B cell (primary cell): ENCODE measurements at regions of chr20 and their contacts with region 1.

Region 1: GRCh38 chr20:38073307-38074071 is 39.9 kb downstream of the RPRD1B start:
- DNase-seq: peak; percentile 75
- ATAC-seq: peak; percentile 53
- H3K4me3 ChIP-seq: no peak overlapping the region
- H3K4me3 Mint-ChIP-seq: no peak overlapping the region
- H3K27ac ChIP-seq: peak overlapping the region in 1 of 2 donors; percentile 5
- H3K27ac Mint-ChIP-seq: peak overlapping the region; percentile 68
- H3K4me1 ChIP-seq: peaks cover 27 to 41% of the 10 kb centered on the region in 2 donors
- H3K4me1 Mint-ChIP-seq: peaks cover 53% of the 10 kb centered on the region
- H3K27me3 ChIP-seq: no peaks in the 10 kb centered on the region
- H3K27me3 Mint-ChIP-seq: no peaks in the 10 kb centered on the region
- CTCF ChIP-seq: peak; percentile 81

Region 2: DNA sequence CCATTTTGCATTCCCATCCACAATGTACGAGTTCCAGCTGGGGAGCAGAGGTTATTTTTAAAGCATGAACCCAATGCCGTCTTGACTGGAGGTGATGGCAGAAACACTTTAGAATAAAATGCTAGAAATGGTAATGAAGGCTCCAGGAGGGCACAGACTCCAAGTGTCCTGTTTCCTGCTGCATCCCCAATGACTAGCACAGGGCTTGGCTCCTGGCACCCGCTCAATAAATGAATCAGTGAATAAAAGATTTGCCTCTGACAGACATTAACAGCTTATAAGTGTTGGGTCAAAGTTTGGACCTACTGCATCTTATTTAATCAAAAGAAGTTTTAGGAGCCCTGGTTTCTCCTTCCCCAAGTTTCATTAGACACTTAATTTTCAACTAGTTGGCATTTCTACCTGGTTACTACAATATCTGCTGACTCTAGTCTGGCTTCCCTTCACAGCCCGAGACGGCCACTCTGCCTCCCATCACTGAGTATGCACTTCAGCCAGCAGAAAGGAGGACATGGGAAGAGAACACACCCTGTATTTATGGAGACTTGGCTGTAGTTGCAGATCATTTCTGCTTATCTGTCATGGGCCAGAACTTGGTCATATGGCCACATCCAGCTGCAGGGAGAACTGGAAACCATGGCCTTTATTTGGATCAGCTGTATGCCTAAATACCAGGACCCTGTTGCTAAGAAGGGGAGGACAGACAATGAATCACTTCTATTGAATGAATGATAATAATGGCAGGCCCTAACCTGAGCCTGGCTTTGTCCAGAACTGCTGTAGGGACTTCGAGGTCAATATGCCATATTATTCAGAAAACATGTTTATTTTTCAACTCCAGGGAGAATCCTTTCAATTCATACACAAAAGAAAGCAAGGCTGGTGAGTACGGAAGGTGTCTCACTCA is 103.3 kb before region 1 on chr20:
- CTCF ChIA-PET with region 1: no interaction called
- POLR2A ChIA-PET with region 1: no interaction called
- intact Hi-C with region 1: no loop called
- DNase-seq: no peak
- ATAC-seq: no peak
- H3K4me3 ChIP-seq: no peak overlapping the region
- H3K4me3 Mint-ChIP-seq: no peak overlapping the region
- H3K27ac ChIP-seq: no peak overlapping the region
- H3K27ac Mint-ChIP-seq: no peak overlapping the region
- H3K4me1 ChIP-seq: no peaks in the 10 kb centered on the region
- H3K4me1 Mint-ChIP-seq: no peaks in the 10 kb centered on the region
- H3K27me3 ChIP-seq: peaks cover 0 to 7% (median 0%) of the 10 kb centered on the region in 4 experiments
- H3K27me3 Mint-ChIP-seq: peaks cover 15% of the 10 kb centered on the region
- CTCF ChIP-seq: no peak

Region 3: DNA sequence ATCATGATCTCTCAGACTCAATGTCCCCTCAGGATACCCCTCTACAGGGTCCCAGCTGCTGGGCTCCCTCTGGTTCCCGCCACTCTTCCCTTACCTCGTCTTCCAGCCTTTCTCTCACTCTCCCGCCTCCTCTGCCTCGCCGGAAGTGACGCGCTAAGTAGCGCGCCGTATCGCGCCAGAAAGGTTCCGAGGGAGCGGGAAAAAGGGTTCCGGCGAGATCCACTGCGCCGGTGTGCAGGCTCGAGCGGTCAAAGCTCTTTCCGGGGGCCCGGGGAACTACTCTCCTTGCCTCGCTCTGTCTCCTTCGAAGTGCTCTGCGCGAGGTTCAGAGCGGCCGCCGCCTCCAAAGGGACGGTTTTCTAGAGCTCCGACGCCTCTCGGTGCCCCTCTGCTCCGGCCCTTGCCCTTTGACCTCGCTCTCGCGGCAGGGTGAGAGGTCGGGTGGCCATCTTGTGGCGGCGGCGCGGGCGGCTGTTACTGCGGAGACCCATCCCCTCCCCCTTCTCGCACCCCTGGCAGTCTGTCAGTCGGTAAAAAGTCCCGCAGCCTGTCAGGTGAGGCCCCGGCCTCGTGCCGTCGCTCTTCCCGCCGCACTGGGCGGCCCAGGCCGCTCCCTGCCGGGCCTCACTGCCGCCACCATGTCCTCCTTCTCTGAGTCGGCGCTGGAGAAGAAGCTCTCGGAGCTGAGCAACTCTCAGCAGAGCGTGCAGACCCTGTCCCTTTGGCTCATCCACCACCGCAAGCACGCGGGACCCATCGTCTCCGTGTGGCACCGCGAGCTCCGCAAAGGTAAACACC is 40.0 kb before region 1 on chr20 and contains the starts of genes RPRD1B and TTI1:
- CTCF ChIA-PET with region 1: interaction called, 7 read pairs
- POLR2A ChIA-PET with region 1: no interaction called
- intact Hi-C with region 1: loop called (anchors 1 kb)
- DNase-seq: peak; percentile 95
- ATAC-seq: peak; percentile 89
- H3K4me3 ChIP-seq: peak within 1 kb of the TSS; percentile 84 to 98 (median 87)
- H3K4me3 Mint-ChIP-seq: peak within 1 kb of the TSS; percentile 95
- H3K27ac ChIP-seq: peak within 1 kb of the TSS; percentile 87 to 90
- H3K27ac Mint-ChIP-seq: peak within 1 kb of the TSS; percentile 92
- H3K4me1 ChIP-seq: peaks cover 35 to 46% of the 10 kb centered on the region in 2 donors
- H3K4me1 Mint-ChIP-seq: peaks cover 74% of the 10 kb centered on the region
- H3K27me3 ChIP-seq: no peaks in the 10 kb centered on the region
- H3K27me3 Mint-ChIP-seq: no peaks in the 10 kb centered on the region
- CTCF ChIP-seq: no peak
- total RNA-seq, gene RPRD1B: 54.9 and 55.9 TPM in 2 replicates
- total RNA-seq, gene TTI1: 33.9 and 34.5 TPM in 2 replicates

Region 4: DNA sequence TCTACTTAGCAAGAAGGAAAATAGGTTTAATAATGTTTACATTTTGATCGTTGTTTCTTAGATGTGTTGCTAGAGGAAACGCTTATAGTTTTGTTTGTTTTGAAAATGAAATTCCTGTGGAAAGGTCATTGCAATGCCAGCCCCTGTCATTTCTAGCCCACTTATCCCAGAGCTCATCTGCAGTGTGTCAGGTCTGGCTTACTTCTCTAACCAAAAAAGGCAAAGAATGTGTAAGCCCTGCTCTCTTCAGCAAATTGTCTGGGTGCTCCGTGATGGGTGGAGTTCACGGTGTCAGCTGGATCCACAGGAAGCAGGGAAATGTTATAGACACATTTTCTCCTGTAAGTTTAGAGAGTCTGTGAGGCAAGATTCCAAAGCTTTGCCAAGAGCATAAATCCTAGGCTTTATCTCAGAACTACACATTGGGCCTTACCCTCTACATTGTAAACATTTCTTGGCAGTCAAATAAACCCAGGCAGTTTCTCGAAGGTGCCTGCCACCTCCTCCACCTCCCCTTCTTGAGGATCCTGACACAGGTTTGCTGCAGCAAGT is 11.0 kb after region 1 on chr20:
- CTCF ChIA-PET with region 1: interaction called, 131 read pairs
- POLR2A ChIA-PET with region 1: interaction called, 8 read pairs
- intact Hi-C with region 1: no loop called
- DNase-seq: no peak
- ATAC-seq: no peak
- H3K4me3 ChIP-seq: no peak overlapping the region
- H3K4me3 Mint-ChIP-seq: no peak overlapping the region
- H3K27ac ChIP-seq: no peak overlapping the region
- H3K27ac Mint-ChIP-seq: no peak overlapping the region
- H3K4me1 ChIP-seq: no peaks in the 10 kb centered on the region
- H3K4me1 Mint-ChIP-seq: peaks cover 41% of the 10 kb centered on the region
- H3K27me3 ChIP-seq: no peaks in the 10 kb centered on the region
- H3K27me3 Mint-ChIP-seq: no peaks in the 10 kb centered on the region
- CTCF ChIP-seq: no peak

Region 5: DNA sequence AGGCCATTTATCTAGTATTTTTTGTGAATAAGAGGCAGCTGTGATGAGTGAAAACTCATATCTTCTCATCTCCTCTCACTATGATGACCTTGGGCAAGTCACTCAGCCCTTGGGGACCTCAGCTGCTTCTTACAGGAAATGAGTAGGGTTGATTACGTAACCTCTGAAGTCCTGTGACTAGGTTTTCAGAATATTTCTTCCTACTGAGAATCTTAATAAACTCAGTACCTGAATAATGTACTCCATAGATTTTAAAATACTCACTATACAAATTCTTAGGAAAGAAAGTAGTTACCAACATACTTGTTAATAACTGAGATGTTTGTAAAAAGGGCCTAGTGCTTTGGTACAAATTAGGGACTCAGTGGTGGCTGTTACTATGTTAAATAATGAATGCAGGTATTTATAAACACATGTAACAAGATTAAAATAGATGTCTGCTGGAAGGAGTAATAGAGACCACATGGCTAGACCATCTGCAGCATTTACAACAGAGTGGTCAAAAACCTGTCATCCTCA is 20.9 kb after region 1 on chr20:
- CTCF ChIA-PET with region 1: interaction called, 131 read pairs
- POLR2A ChIA-PET with region 1: interaction called, 20 read pairs
- intact Hi-C with region 1: loop called (anchors 1 kb)
- DNase-seq: peak; percentile 86
- ATAC-seq: peak; percentile 68
- H3K4me3 ChIP-seq: peak overlapping the region in 1 of 5 experiments; percentile 21
- H3K4me3 Mint-ChIP-seq: peak overlapping the region; percentile 77
- H3K27ac ChIP-seq: peak overlapping the region; percentile 95 to 96
- H3K27ac Mint-ChIP-seq: peak overlapping the region; percentile 98
- H3K4me1 ChIP-seq: peaks cover 53 to 60% of the 10 kb centered on the region in 2 donors
- H3K4me1 Mint-ChIP-seq: peaks cover 72% of the 10 kb centered on the region
- H3K27me3 ChIP-seq: no peaks in the 10 kb centered on the region
- H3K27me3 Mint-ChIP-seq: no peaks in the 10 kb centered on the region
- CTCF ChIP-seq: no peak

Region 6: DNA sequence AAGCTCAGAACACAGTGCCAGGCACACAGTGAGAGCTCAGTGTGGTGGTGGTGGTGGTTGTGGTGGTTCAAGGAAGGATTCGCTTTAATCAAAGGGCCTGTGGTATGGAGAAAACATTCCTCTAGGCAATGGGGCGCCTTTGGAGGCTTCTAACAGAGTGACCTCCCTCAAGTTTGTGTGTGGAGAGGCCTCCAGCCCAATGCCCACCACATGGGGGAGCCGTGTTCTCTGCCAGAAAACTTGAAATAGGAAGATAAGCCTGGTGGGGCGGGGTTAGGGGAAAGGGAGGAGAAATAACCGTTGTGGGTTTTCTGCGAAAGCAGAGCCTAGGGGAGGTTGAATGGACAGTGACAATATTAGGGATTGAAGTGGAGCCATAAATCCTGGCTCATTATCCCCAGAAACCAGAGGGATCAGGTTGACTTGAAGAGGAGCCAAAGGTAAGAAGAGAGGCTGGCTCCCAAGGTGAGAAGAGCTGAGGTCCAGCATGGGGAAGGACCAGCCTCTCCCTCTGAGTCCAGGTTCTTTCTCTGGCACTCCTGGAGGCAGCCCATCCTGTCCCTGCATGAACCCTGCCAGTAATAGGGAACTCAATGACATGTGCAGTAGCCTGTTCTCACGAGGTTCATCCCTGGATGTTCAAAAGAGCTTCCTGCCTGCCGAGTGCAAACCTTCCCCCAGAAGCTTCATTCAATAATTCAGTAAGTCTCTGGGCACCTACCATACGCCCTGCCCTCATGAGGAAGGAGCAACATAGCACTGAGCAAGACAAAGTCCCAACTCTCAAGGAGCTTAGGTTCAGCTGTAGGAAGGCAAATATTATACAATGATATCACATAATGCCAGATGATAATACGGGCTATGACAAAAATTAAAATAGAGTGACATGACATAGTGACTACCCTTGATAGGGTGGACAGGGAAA is 40.2 kb after region 1 on chr20:
- CTCF ChIA-PET with region 1: interaction called, 101 read pairs
- POLR2A ChIA-PET with region 1: no interaction called
- intact Hi-C with region 1: no loop called
- DNase-seq: no peak
- ATAC-seq: no peak
- H3K4me3 ChIP-seq: no peak overlapping the region
- H3K4me3 Mint-ChIP-seq: no peak overlapping the region
- H3K27ac ChIP-seq: no peak overlapping the region
- H3K27ac Mint-ChIP-seq: no peak overlapping the region
- H3K4me1 ChIP-seq: peaks cover 0 to 3% of the 10 kb centered on the region in 2 donors
- H3K4me1 Mint-ChIP-seq: peaks cover 3% of the 10 kb centered on the region
- H3K27me3 ChIP-seq: no peaks in the 10 kb centered on the region
- H3K27me3 Mint-ChIP-seq: no peaks in the 10 kb centered on the region
- CTCF ChIP-seq: no peak

Region 7: GRCh38 chr20:38123021-38123587 is 49.6 kb after region 1 on chr20:
- CTCF ChIA-PET with region 1: interaction called, 15 read pairs
- POLR2A ChIA-PET with region 1: no interaction called
- intact Hi-C with region 1: no loop called
- DNase-seq: no peak
- ATAC-seq: no peak
- H3K4me3 ChIP-seq: no peak overlapping the region
- H3K4me3 Mint-ChIP-seq: no peak overlapping the region
- H3K27ac ChIP-seq: no peak overlapping the region
- H3K27ac Mint-ChIP-seq: no peak overlapping the region
- H3K4me1 ChIP-seq: no peaks in the 10 kb centered on the region
- H3K4me1 Mint-ChIP-seq: no peaks in the 10 kb centered on the region
- H3K27me3 ChIP-seq: no peaks in the 10 kb centered on the region
- H3K27me3 Mint-ChIP-seq: no peaks in the 10 kb centered on the region
- CTCF ChIP-seq: no peak

Region 8: DNA sequence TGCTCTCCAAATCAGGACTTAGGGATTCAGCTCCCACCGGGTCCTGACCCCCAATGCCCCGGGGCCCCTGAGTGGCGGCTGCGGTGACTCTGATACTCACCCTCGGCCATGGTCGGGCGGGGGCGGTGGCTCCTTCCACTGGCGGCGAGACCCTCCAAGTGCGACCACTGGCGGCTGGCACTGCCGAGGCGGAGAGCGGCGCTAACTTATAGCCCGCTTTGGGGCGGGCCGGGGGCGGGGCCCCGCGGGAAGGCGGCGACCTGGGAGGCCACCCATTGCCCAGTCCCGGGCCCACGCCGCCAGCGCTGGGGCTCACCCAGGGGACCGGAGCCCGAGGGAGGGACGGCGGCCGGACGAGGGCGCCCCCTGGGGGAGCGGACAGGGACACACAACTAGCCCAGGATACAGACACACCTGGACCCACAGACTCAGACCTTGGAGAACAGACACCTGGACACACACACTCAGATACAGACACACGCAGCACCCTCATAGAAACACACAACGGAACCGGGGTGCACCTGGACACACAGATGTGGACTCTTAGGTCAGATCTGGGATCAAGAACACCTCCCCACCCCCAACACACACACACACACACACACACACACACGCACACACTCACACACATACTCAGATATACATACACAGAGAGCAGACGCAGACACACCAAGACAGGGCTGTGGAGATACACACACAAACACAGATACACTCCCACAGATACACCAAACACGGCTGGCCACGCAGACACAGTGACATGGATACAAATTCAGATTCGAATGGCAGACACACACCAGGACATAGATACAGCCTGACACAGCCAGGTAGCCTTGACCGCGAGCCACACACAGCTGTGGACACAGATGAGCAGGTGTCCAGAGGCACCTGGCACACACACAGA is 91.8 kb after region 1 on chr20 and contains the start of gene TGM2:
- CTCF ChIA-PET with region 1: interaction called, 62 read pairs
- POLR2A ChIA-PET with region 1: interaction called, 6 read pairs
- intact Hi-C with region 1: loop called (anchors 1 kb)
- DNase-seq: peak; percentile 82
- ATAC-seq: peak; percentile 95
- H3K4me3 ChIP-seq: peak within 1 kb of the TSS in 4 of 5 experiments; percentile 18 to 44 (median 32)
- H3K4me3 Mint-ChIP-seq: peak within 1 kb of the TSS; percentile 64
- H3K27ac ChIP-seq: no peak within 1 kb of the TSS
- H3K27ac Mint-ChIP-seq: peak within 1 kb of the TSS; percentile 82
- H3K4me1 ChIP-seq: peaks cover 18 to 28% of the 10 kb centered on the region in 2 donors
- H3K4me1 Mint-ChIP-seq: peaks cover 29% of the 10 kb centered on the region
- H3K27me3 ChIP-seq: peaks cover 0 to 7% (median 0%) of the 10 kb centered on the region in 4 experiments
- H3K27me3 Mint-ChIP-seq: no peaks in the 10 kb centered on the region
- CTCF ChIP-seq: peak; percentile 83
- total RNA-seq, gene TGM2: 58.8 and 60.8 TPM in 2 replicates

Region 9: DNA sequence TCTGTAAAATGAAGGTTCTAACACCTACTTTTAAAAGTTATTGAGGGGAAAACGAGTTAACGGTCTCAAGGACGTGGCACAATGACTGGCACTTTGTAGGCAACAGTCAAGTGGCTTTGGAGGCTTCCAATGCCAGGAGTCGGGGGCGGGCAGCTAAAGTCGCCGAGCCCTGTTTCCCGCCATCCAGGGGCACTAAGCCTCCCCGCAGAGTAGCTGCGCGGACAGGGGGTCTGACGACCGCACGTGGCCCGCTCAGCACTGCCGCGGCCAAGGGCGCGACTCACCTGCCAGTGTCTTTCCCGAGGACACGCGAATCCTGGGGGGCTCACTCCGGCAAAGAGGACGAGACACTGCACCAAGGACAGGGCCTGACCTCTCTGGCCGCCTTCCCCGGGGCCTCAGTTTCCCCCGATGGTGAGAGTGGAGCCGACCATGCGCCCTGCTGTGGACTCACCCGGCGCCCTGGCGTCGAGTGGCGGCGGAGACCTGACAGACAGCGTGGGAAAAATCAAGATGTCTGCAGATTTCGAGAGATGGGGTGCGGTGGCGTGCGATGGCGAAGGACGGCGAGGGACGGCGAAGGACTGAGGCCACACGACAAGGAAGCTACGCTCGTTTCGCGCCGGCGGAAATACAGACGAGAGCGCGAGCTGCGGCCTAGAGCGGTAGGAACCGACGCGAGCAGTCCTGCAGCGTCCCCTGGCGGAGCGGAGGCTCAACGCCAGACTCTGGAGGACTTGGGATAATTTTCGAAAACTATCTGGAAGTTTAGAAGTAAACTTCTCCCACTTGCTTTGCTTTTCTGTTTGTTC is 361.5 kb after region 1 on chr20 and contains the start of gene SNHG17:
- CTCF ChIA-PET with region 1: no interaction called
- POLR2A ChIA-PET with region 1: no interaction called
- intact Hi-C with region 1: no loop called
- DNase-seq: peak; percentile 95
- ATAC-seq: peak; percentile 92
- H3K4me3 ChIP-seq: peak within 1 kb of the TSS; percentile 56 to 96 (median 88)
- H3K4me3 Mint-ChIP-seq: peak within 1 kb of the TSS; percentile 99
- H3K27ac ChIP-seq: peak within 1 kb of the TSS; percentile 72 to 83
- H3K27ac Mint-ChIP-seq: peak within 1 kb of the TSS; percentile 98
- H3K4me1 ChIP-seq: peaks cover 11 to 13% of the 10 kb centered on the region in 2 donors
- H3K4me1 Mint-ChIP-seq: peaks cover 27% of the 10 kb centered on the region
- H3K27me3 ChIP-seq: peaks cover 0 to 3% (median 0%) of the 10 kb centered on the region in 4 experiments
- H3K27me3 Mint-ChIP-seq: peaks cover 12% of the 10 kb centered on the region
- CTCF ChIP-seq: peak; percentile 100
- total RNA-seq, gene SNHG17: 49.6 and 64.3 TPM in 2 replicates